PC-3 (cell line): ENCODE measurements at regions of chr16 and their contacts with region 1.

Region 1: GRCh38 chr16:86519649-86520316 is 9.5 kb downstream of the FOXF1 start:
- DNase-seq: peak; percentile 65
- ATAC-seq: peak; percentile 56
- H3K4me3 ChIP-seq: peak overlapping the region; percentile 44; the same call in 1 of the 2 replicates
- H3K27ac ChIP-seq: no peak overlapping the region
- H3K4me1 ChIP-seq: 0 out of 2 replicates have a peak, but pooled peaks cover 6% of the 10 kb centered on the region
- H3K27me3 ChIP-seq: peaks cover 40% of the 10 kb centered on the region
- CTCF ChIP-seq: peak; percentile 80

Region 2: DNA sequence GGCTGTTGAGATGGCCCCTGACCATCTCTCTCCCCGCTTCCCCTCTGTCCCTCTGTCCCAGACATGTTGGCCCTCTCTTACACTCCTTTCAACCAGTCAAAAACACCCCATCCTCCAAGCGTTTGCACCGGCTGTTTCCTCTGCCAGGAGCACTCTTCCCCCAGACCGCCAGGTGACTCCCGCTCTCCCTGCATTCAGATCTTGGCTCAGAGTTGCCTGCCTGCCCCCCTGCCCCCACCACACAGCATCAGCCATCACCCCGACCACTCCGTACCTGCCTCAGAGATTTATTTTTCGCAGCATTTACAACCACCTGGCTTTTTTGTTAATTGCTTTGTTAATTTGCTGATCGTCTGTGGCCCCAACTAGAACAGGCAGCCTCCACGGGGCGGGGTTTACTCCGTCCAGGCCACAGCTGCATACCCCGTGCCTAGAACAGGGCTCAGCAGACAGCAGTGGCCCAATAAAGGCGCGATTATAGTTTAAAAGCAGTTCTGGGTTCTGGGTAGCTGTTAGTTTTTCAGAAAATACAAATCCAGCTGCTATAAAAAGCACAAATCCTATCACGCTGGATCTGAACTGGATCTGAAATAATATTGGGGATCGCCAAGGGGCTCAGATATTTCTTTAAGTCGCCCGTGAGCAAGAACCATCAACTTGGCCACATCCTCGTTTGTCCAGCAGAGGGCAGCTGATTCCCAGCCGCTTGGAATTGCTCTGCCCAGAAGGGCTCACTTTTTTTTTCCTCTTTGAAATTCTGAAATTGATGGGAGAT is 447.3 kb before region 1 on chr16:
- CTCF ChIA-PET with region 1: interaction called, 11 read pairs
- POLR2A ChIA-PET with region 1: no interaction called
- intact Hi-C with region 1: loop called (anchors 1 kb)
- DNase-seq: peak; percentile 59
- ATAC-seq: 0 out of 2 replicates have a peak, but pooled peaks have one; percentile 42
- H3K4me3 ChIP-seq: no peak overlapping the region
- H3K27ac ChIP-seq: no peak overlapping the region
- H3K4me1 ChIP-seq: no peaks in the 10 kb centered on the region
- H3K27me3 ChIP-seq: peaks cover 14% of the 10 kb centered on the region
- CTCF ChIP-seq: peak; percentile 74

Region 3: GRCh38 chr16:86338404-86339115 is 181.2 kb before region 1 on chr16:
- CTCF ChIA-PET with region 1: no interaction called
- POLR2A ChIA-PET with region 1: no interaction called
- intact Hi-C with region 1: no loop called
- DNase-seq: no peak
- ATAC-seq: no peak
- H3K4me3 ChIP-seq: no peak overlapping the region
- H3K27ac ChIP-seq: no peak overlapping the region
- H3K4me1 ChIP-seq: no peaks in the 10 kb centered on the region
- H3K27me3 ChIP-seq: peaks cover 37% of the 10 kb centered on the region
- CTCF ChIP-seq: no peak